ENCODE measurements at regions of chr5 and their contacts with region 1.

Region 1: GRCh38 chr5:56900858-56901578 is 8.4 kb upstream of the SETD9 start:
- DNase-seq: peak; percentile 54
- H3K4me3 Mint-ChIP-seq: no peak overlapping the region
- H3K27ac Mint-ChIP-seq: no peak overlapping the region
- H3K4me1 Mint-ChIP-seq: no peaks in the 10 kb centered on the region
- H3K27me3 Mint-ChIP-seq: no peaks in the 10 kb centered on the region
- CTCF ChIP-seq: peak; percentile 70

Region 2: DNA sequence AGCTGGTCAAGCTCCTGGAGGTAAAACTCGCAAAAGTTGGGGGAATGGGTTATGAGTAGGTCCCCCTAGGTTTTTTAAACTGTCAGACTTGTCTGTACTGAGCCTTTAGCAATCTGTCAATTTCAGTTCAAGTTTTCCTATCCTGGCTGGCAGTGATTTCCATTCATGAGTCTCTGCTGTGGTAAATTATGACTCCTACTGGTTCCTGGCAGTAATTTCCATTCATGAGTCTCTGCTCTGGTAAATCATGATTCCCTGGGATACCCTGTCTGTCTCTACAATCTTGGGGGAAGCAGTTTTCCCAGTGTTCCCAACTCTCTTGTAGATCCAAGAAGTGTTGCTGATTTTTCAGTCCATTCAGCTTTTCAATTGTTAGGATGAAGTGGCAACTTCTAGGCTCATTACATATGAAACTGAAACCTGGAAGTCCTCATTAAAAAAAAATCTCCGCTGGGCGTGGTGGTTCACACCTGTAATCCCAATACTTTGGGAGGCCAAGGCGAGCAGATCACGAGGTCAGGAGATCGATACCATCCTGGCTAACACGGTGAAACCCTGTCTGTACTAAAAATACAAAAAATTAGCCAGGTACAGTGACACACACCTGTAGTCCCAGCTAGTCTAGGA is 181.5 kb after region 1 on chr5:
- CTCF ChIA-PET with region 1: no interaction called
- intact Hi-C with region 1: loop called (anchors 1 kb)
- DNase-seq: peak; percentile 14
- H3K4me3 Mint-ChIP-seq: no peak overlapping the region
- H3K27ac Mint-ChIP-seq: no peak overlapping the region
- H3K4me1 Mint-ChIP-seq: no peaks in the 10 kb centered on the region
- H3K27me3 Mint-ChIP-seq: no peaks in the 10 kb centered on the region
- CTCF ChIP-seq: peak; percentile 22

Region 3: GRCh38 chr5:57137401-57137800 is 236.4 kb after region 1 on chr5:
- CTCF ChIA-PET with region 1: interaction called, 12 read pairs
- intact Hi-C with region 1: loop called (anchors 1 kb)
- DNase-seq: no peak
- H3K4me3 Mint-ChIP-seq: peak overlapping the region; percentile 65
- H3K27ac Mint-ChIP-seq: no peak overlapping the region
- H3K4me1 Mint-ChIP-seq: no peaks in the 10 kb centered on the region
- H3K27me3 Mint-ChIP-seq: no peaks in the 10 kb centered on the region
- CTCF ChIP-seq: no peak

Region 4: GRCh38 chr5:57221049-57221568 is 320.1 kb after region 1 on chr5:
- CTCF ChIA-PET with region 1: interaction called, 9 read pairs
- intact Hi-C with region 1: loop called (anchors 2 kb)
- DNase-seq: peak; percentile 63
- H3K4me3 Mint-ChIP-seq: no peak overlapping the region
- H3K27ac Mint-ChIP-seq: no peak overlapping the region
- H3K4me1 Mint-ChIP-seq: peaks cover 11% of the 10 kb centered on the region
- H3K27me3 Mint-ChIP-seq: no peaks in the 10 kb centered on the region
- CTCF ChIP-seq: peak; percentile 78

Region 5: DNA sequence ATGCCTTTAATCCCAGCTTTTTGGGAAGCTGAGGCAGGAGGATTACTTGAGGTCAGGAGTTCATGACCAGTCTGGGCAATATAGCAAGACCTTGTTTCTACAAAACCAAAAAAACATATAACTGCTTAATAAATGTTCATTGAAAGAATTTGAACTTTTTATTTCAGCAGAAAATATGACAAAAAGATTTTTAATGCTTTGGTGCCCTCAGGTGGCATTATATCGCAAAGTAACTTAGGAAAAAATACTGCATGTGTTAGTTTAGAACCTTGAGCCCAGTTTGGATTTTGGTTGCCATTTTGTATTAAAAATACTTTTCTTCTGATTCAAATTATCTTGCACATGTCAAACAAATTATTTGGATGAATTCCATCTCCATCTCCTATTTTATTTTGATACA is 376.1 kb after region 1 on chr5:
- CTCF ChIA-PET with region 1: no interaction called
- intact Hi-C with region 1: loop called (anchors 1 kb)
- DNase-seq: peak; percentile 15
- H3K4me3 Mint-ChIP-seq: no peak overlapping the region
- H3K27ac Mint-ChIP-seq: no peak overlapping the region
- H3K4me1 Mint-ChIP-seq: no peaks in the 10 kb centered on the region
- H3K27me3 Mint-ChIP-seq: no peaks in the 10 kb centered on the region
- CTCF ChIP-seq: peak; percentile 24